B cell (primary cell): ENCODE measurements at regions of chr22 and their contacts with region 1.

Region 1: GRCh38 chr22:23539135-23539838 is 40.8 kb downstream of the IGLL1 start:
- DNase-seq: peak; percentile 83
- ATAC-seq: peak; percentile 100
- H3K4me3 ChIP-seq: peak overlapping the region in 1 of 5 experiments; percentile 12
- H3K4me3 Mint-ChIP-seq: peak overlapping the region; percentile 42
- H3K27ac ChIP-seq: no peak overlapping the region
- H3K27ac Mint-ChIP-seq: no peak overlapping the region
- H3K4me1 ChIP-seq: peaks cover 0 to 20% of the 10 kb centered on the region in 2 donors
- H3K4me1 Mint-ChIP-seq: peaks cover 21% of the 10 kb centered on the region
- H3K27me3 ChIP-seq: peaks cover 0 to 2% (median 0%) of the 10 kb centered on the region in 4 experiments
- H3K27me3 Mint-ChIP-seq: no peaks in the 10 kb centered on the region
- CTCF ChIP-seq: peak; percentile 81

Region 2: DNA sequence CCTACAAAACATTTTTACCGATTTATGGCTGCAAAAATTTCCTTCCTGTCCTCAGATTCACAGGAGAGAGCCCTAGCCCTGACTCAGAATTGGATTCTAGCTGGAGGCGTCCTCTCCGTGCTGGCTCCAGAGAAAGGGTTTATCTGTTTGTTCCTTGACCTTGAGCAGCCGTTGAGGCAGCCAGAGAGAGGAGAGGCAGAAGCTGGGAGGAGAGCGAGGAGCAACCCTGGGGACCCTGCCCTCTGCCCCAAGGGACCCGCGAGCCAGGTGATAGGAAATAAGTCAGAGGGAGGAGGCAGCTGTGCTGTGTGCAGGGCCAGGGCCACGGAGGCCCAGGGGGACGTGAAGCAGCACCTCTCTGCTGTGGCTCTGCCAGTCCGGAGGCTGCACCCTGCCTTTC is 34.8 kb before region 1 on chr22:
- CTCF ChIA-PET with region 1: no interaction called
- POLR2A ChIA-PET with region 1: no interaction called
- intact Hi-C with region 1: no loop called
- DNase-seq: peak; percentile 35
- ATAC-seq: peak; percentile 75
- H3K4me3 ChIP-seq: no peak overlapping the region
- H3K4me3 Mint-ChIP-seq: peak overlapping the region; percentile 1
- H3K27ac ChIP-seq: no peak overlapping the region
- H3K27ac Mint-ChIP-seq: peak overlapping the region; percentile 37
- H3K4me1 ChIP-seq: peaks cover 6 to 13% of the 10 kb centered on the region in 2 donors
- H3K4me1 Mint-ChIP-seq: peaks cover 14% of the 10 kb centered on the region
- H3K27me3 ChIP-seq: no peaks in the 10 kb centered on the region
- H3K27me3 Mint-ChIP-seq: peaks cover 26% of the 10 kb centered on the region
- CTCF ChIP-seq: no peak

Region 3: GRCh38 chr22:23521441-23522113 is 17.7 kb before region 1 on chr22:
- CTCF ChIA-PET with region 1: no interaction called
- POLR2A ChIA-PET with region 1: no interaction called
- intact Hi-C with region 1: loop called (anchors 2 kb)
- DNase-seq: peak; percentile 91
- ATAC-seq: peak; percentile 94
- H3K4me3 ChIP-seq: peak overlapping the region in 4 of 5 experiments; percentile 25 to 55 (median 48)
- H3K4me3 Mint-ChIP-seq: peak overlapping the region; percentile 82
- H3K27ac ChIP-seq: peak overlapping the region in 1 of 2 donors; percentile 51
- H3K27ac Mint-ChIP-seq: peak overlapping the region; percentile 68
- H3K4me1 ChIP-seq: peaks cover 13 to 15% of the 10 kb centered on the region in 2 donors
- H3K4me1 Mint-ChIP-seq: peaks cover 4% of the 10 kb centered on the region
- H3K27me3 ChIP-seq: peaks cover 0 to 51% (median 12%) of the 10 kb centered on the region in 4 experiments
- H3K27me3 Mint-ChIP-seq: peaks cover 36% of the 10 kb centered on the region
- CTCF ChIP-seq: peak; percentile 34

Region 4: GRCh38 chr22:23591201-23591791 is 52.0 kb after region 1 on chr22:
- CTCF ChIA-PET with region 1: interaction called, 6 read pairs
- POLR2A ChIA-PET with region 1: no interaction called
- intact Hi-C with region 1: loop called (anchors 5 kb)
- DNase-seq: peak; percentile 73
- ATAC-seq: peak; percentile 66
- H3K4me3 ChIP-seq: no peak overlapping the region
- H3K4me3 Mint-ChIP-seq: no peak overlapping the region
- H3K27ac ChIP-seq: no peak overlapping the region
- H3K27ac Mint-ChIP-seq: no peak overlapping the region
- H3K4me1 ChIP-seq: no peaks in the 10 kb centered on the region
- H3K4me1 Mint-ChIP-seq: peaks cover 4% of the 10 kb centered on the region
- H3K27me3 ChIP-seq: peaks cover 0 to 10% (median 0%) of the 10 kb centered on the region in 4 experiments
- H3K27me3 Mint-ChIP-seq: no peaks in the 10 kb centered on the region
- CTCF ChIP-seq: peak; percentile 85